ENCODE measurements at regions of chr1 and their contacts with region 1.

Region 1: GRCh38 chr1:27662707-27663393 is 9.1 kb downstream of the IFI6 start:
- DNase-seq: peak; percentile 96
- H3K4me3 Mint-ChIP-seq: peak overlapping the region; percentile 66
- H3K27ac Mint-ChIP-seq: peak overlapping the region; percentile 99
- H3K4me1 Mint-ChIP-seq: peaks cover 44% of the 10 kb centered on the region
- H3K27me3 Mint-ChIP-seq: no peaks in the 10 kb centered on the region

Region 2: GRCh38 chr1:27402349-27402754 is 260.5 kb before region 1 on chr1:
- CTCF ChIA-PET with region 1: interaction called, 3 read pairs
- intact Hi-C with region 1: loop called (anchors 2 kb)
- DNase-seq: peak; percentile 53
- H3K4me3 Mint-ChIP-seq: no peak overlapping the region
- H3K27ac Mint-ChIP-seq: peak overlapping the region; percentile 74
- H3K4me1 Mint-ChIP-seq: peaks cover 19% of the 10 kb centered on the region
- H3K27me3 Mint-ChIP-seq: no peaks in the 10 kb centered on the region

Region 3: GRCh38 chr1:27525296-27526272 is 137.3 kb before region 1 on chr1:
- CTCF ChIA-PET with region 1: interaction called, 4 read pairs
- intact Hi-C with region 1: loop called (anchors 2 kb)
- DNase-seq: peak; percentile 83
- H3K4me3 Mint-ChIP-seq: peak overlapping the region; percentile 69
- H3K27ac Mint-ChIP-seq: peak overlapping the region; percentile 72
- H3K4me1 Mint-ChIP-seq: peaks cover 56% of the 10 kb centered on the region
- H3K27me3 Mint-ChIP-seq: no peaks in the 10 kb centered on the region

Region 4: GRCh38 chr1:27568300-27569087 is 94.4 kb before region 1 on chr1:
- CTCF ChIA-PET with region 1: interaction called, 12 read pairs
- intact Hi-C with region 1: loop called (anchors 1 kb)
- DNase-seq: peak; percentile 96
- H3K4me3 Mint-ChIP-seq: peak overlapping the region; percentile 63
- H3K27ac Mint-ChIP-seq: no peak overlapping the region
- H3K4me1 Mint-ChIP-seq: peaks cover 13% of the 10 kb centered on the region
- H3K27me3 Mint-ChIP-seq: no peaks in the 10 kb centered on the region

Region 5: GRCh38 chr1:27609210-27609555 is 53.7 kb before region 1 on chr1:
- CTCF ChIA-PET with region 1: interaction called, 263 read pairs
- intact Hi-C with region 1: loop called (anchors 1 kb)
- DNase-seq: no peak
- H3K4me3 Mint-ChIP-seq: no peak overlapping the region
- H3K27ac Mint-ChIP-seq: no peak overlapping the region
- H3K4me1 Mint-ChIP-seq: peaks cover 24% of the 10 kb centered on the region
- H3K27me3 Mint-ChIP-seq: no peaks in the 10 kb centered on the region

Region 6: GRCh38 chr1:27634177-27634984 is 28.5 kb before region 1 on chr1:
- CTCF ChIA-PET with region 1: interaction called, 20 read pairs
- intact Hi-C with region 1: loop called (anchors 1 kb)
- DNase-seq: peak; percentile 57
- H3K4me3 Mint-ChIP-seq: peak overlapping the region; percentile 46
- H3K27ac Mint-ChIP-seq: no peak overlapping the region
- H3K4me1 Mint-ChIP-seq: peaks cover 65% of the 10 kb centered on the region
- H3K27me3 Mint-ChIP-seq: no peaks in the 10 kb centered on the region

Region 7: GRCh38 chr1:27650539-27651175 is 12.2 kb before region 1 on chr1:
- CTCF ChIA-PET with region 1: interaction called, 31 read pairs
- intact Hi-C with region 1: no loop called
- DNase-seq: peak; percentile 31
- H3K4me3 Mint-ChIP-seq: no peak overlapping the region
- H3K27ac Mint-ChIP-seq: no peak overlapping the region
- H3K4me1 Mint-ChIP-seq: peaks cover 12% of the 10 kb centered on the region
- H3K27me3 Mint-ChIP-seq: no peaks in the 10 kb centered on the region

Measured in activated naive CD4-positive, alpha-beta T cell treated with anti-CD3 and anti-CD28 coated beads for 36 hours (primary cell).